ENCODE measurements at regions of chr3 and their contacts with region 1.

Region 1: DNA sequence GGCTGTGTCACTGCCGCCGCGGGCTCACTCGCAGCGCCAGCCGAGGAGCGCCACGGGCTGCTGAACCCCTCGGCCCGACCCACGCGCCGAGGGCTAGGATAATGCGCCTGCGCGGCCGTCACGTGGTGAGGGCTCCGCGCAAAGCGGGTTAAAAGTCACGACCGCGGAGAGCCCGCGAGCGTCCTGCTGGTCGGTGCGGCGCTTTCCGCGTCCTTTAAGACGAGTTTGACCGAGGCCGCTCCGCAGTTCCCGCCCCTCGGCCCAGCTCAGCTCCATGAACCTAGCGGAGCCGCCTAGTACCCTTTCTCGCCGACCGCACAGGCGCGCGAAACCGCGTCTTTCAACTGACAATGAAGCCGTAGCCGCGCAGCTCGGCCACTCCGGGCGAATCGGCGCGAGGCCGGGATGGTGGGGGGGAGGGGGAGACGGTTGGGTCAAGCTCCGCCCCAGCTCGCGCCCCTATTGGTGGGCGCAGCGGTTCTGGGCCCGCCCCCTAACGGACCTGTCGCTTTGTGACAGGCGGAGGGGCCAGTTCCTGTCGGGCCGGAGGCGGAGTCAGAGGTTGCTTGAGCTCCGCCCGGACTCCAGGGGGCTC is 636 bp upstream of the STT3B start:
- DNase-seq: peak; percentile 99
- H3K4me3 Mint-ChIP-seq: peak overlapping the region; percentile 97
- H3K27ac Mint-ChIP-seq: peak overlapping the region; percentile 99
- H3K4me1 Mint-ChIP-seq: peaks cover 11% of the 10 kb centered on the region
- H3K27me3 Mint-ChIP-seq: no peaks in the 10 kb centered on the region

Region 2: DNA sequence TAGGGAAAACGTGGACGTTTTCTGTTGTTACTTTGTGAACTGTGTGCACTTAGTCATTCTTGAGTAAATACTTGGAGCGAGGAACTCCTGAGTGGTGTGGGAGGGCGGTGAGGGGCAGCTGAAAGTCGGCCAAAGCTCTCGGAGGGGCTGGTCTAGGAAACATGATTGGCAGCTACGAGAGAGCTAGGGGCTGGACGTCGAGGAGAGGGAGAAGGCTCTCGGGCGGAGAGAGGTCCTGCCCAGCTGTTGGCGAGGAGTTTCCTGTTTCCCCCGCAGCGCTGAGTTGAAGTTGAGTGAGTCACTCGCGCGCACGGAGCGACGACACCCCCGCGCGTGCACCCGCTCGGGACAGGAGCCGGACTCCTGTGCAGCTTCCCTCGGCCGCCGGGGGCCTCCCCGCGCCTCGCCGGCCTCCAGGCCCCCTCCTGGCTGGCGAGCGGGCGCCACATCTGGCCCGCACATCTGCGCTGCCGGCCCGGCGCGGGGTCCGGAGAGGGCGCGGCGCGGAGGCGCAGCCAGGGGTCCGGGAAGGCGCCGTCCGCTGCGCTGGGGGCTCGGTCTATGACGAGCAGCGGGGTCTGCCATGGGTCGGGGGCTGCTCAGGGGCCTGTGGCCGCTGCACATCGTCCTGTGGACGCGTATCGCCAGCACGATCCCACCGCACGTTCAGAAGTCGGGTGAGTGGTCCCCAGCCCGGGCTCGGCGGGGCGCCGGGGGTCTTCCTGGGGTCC is 925.6 kb before region 1 on chr3 and contains the start of gene TGFBR2:
- CTCF ChIA-PET with region 1: no interaction called
- POLR2A ChIA-PET with region 1: interaction called, 5 read pairs
- intact Hi-C with region 1: loop called (anchors 5 kb)
- DNase-seq: peak; percentile 92
- H3K4me3 Mint-ChIP-seq: peak within 1 kb of the TSS; percentile 87
- H3K27ac Mint-ChIP-seq: peak within 1 kb of the TSS; percentile 96
- H3K4me1 Mint-ChIP-seq: peaks cover 53% of the 10 kb centered on the region
- H3K27me3 Mint-ChIP-seq: no peaks in the 10 kb centered on the region
- total RNA-seq, gene TGFBR2: 36.8 to 37.0 TPM

Region 3: GRCh38 chr3:31213869-31214486 is 318.1 kb before region 1 on chr3:
- CTCF ChIA-PET with region 1: no interaction called
- POLR2A ChIA-PET with region 1: interaction called, 3 read pairs
- intact Hi-C with region 1: loop called (anchors 5 kb)
- DNase-seq: peak; percentile 57
- H3K4me3 Mint-ChIP-seq: peak overlapping the region; percentile 1
- H3K27ac Mint-ChIP-seq: peak overlapping the region; percentile 82
- H3K4me1 Mint-ChIP-seq: peaks cover 94% of the 10 kb centered on the region
- H3K27me3 Mint-ChIP-seq: no peaks in the 10 kb centered on the region

Region 4: DNA sequence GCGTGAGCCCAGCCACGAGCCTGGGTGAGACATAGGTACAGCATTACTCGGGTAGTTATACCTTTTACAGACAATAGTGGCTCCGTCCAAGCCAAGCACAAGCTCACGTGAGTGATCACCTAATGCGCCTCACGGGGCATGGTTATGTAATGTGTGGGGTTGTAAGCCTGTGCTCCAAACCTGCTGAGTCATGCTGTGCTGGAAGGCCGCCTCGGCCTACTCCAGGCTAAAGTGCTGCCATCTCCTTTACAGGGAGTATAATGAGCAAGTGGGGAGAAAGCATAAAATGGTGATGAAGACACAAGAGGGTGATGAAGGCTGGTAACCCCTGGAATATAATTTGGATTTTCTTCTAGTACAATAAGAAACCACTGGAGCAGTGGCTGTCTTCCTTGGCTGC is 175.1 kb before region 1 on chr3:
- CTCF ChIA-PET with region 1: no interaction called
- POLR2A ChIA-PET with region 1: interaction called, 3 read pairs
- intact Hi-C with region 1: loop called (anchors 2 kb)
- DNase-seq: peak; percentile 31
- H3K4me3 Mint-ChIP-seq: no peak overlapping the region
- H3K27ac Mint-ChIP-seq: peak overlapping the region; percentile 66
- H3K4me1 Mint-ChIP-seq: peaks cover 38% of the 10 kb centered on the region
- H3K27me3 Mint-ChIP-seq: no peaks in the 10 kb centered on the region

Region 5: DNA sequence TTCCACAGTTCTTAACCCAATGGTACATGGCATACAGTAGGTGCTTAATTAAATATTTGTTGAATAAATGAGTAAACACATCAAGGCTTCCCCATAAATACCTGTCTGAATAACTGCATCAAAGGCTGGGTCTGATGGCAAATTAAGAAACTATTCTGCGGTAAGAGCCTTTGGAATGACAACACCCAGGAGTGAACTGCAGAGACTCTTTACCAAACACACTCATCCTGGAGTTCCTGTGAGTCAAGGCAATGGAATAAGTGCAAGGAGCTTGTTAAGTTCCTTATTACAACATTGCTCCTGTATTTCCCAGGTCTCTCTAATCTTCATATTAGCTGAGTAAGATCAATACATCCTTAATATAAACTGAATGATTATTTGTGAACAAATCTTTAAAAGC is 119.3 kb before region 1 on chr3:
- CTCF ChIA-PET with region 1: no interaction called
- POLR2A ChIA-PET with region 1: no interaction called
- intact Hi-C with region 1: no loop called
- DNase-seq: no peak
- H3K4me3 Mint-ChIP-seq: no peak overlapping the region
- H3K27ac Mint-ChIP-seq: no peak overlapping the region
- H3K4me1 Mint-ChIP-seq: peaks cover 10% of the 10 kb centered on the region
- H3K27me3 Mint-ChIP-seq: no peaks in the 10 kb centered on the region

Region 6: DNA sequence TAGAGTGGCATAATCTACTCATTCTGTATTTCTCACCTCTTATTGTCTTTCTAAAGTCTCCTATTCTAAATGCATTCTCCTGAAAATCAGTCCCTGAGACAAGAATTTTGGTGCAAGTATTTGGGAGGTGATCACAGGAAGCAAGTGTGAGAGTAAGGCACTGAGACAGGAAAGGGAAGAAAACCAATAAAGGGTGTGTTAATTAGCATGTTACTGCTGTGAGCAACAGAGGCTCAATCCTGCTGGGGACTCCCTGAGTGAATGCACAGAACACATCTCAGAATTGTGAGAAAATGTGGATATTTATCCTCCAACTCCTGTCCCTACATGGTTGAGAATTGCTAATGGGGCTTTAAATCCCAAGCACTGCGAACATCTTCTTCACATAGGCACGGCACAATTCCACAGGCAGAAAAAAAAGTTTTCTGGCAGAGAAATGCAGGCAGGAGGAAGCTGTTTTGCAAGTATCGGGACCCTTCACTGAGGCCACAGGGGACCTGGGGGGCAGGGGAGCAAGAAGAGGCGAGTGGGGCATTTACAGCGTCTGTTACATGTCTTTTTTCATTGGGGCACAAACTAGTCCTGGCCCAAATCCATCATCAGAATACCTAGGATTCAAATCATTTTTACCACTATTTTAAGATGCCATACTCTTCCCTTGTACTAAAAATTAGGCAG is 26.6 kb before region 1 on chr3:
- CTCF ChIA-PET with region 1: interaction called, 7 read pairs
- POLR2A ChIA-PET with region 1: interaction called, 8 read pairs
- intact Hi-C with region 1: loop called (anchors 1 kb)
- DNase-seq: no peak
- H3K4me3 Mint-ChIP-seq: no peak overlapping the region
- H3K27ac Mint-ChIP-seq: no peak overlapping the region
- H3K4me1 Mint-ChIP-seq: peaks cover 61% of the 10 kb centered on the region
- H3K27me3 Mint-ChIP-seq: no peaks in the 10 kb centered on the region

Region 7: DNA sequence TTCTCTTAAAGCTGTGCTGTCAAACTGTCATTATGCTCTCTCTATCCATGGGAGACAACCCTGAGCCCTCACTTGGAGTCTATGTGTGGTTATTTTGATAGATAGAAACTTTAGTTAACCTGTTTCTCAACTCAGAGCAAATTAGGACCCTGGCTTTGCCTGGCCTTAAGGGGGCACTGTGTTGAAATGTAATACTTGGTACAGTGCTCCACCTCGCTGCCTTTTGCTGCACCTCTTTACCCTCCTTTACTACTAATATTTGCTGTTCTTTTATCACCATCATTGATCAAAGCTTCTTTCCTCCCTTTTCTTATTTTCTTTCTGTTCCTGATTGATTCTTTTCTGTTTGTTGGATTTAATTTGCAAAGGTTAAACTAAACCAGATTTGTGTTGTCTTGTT is 34.9 kb after region 1 on chr3:
- CTCF ChIA-PET with region 1: interaction called, 6 read pairs
- POLR2A ChIA-PET with region 1: interaction called, 9 read pairs
- intact Hi-C with region 1: loop called (anchors 2 kb)
- DNase-seq: peak; percentile 35
- H3K4me3 Mint-ChIP-seq: no peak overlapping the region
- H3K27ac Mint-ChIP-seq: no peak overlapping the region
- H3K4me1 Mint-ChIP-seq: peaks cover 84% of the 10 kb centered on the region
- H3K27me3 Mint-ChIP-seq: no peaks in the 10 kb centered on the region

Region 8: GRCh38 chr3:32684800-32685542 is 1152.9 kb after region 1 on chr3 and contains the start of gene CNOT10:
- CTCF ChIA-PET with region 1: no interaction called
- POLR2A ChIA-PET with region 1: no interaction called
- intact Hi-C with region 1: loop called (anchors 2 kb)
- DNase-seq: peak; percentile 98
- H3K4me3 Mint-ChIP-seq: peak within 1 kb of the TSS; percentile 91
- H3K27ac Mint-ChIP-seq: peak within 1 kb of the TSS; percentile 91
- H3K4me1 Mint-ChIP-seq: peaks cover 33% of the 10 kb centered on the region
- H3K27me3 Mint-ChIP-seq: no peaks in the 10 kb centered on the region
- total RNA-seq, gene CNOT10: 52.4 to 54.7 TPM